Esophagus muscularis mucosa (tissue), 4 donors: ENCODE measurements at regions of chr10 and their contacts with region 1.

Region 1: DNA sequence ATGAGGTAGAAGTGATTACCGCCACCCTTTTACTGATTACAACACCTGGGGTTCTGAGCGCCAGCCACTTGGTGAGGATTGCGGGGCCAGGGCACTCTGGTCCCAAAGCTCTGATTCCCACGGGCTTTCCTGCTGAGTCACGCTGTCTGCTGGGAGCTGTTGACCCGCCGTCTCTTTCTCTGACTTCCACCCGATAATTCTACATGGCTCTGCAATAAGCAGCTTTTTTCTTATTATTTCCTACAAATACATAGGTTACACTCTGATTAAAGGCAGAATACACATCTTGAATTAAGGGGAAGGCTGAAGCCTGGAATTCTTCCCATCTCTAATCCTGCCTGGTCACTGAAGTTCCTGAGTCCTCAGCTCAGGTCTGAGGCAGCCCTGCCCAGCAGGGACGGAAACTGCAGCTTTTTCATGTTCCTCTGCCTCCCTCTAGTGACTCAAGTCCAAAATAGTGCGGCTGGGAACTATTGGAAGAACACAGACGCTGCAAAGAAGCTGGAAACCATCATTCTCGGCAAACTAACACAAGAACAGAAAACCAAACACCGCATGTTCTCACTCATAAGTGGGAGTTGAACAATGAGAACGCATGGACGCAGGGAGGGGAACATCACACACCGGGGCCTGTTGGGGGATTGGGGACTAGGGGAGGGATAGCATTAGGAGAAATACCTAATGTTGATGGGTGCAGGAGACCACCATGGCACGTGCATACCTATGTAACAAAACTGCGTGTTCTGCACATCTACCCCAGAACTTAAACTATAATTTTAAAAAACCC is 178.3 kb downstream of the PRKCQ start:
- DNase-seq: no peak
- H3K4me3 ChIP-seq: peak overlapping the region; percentile 46 to 50 (median 46)
- H3K27ac ChIP-seq: peak overlapping the region; percentile 32 to 72 (median 38)
- H3K4me1 ChIP-seq: peaks cover 2 to 25% (median 22%) of the 10 kb centered on the region in 4 donors
- H3K27me3 ChIP-seq: no peaks in the 10 kb centered on the region
- CTCF ChIP-seq: peak; percentile 76 to 89 (median 80)
- EP300 ChIP-seq: no peak
- POLR2A ChIP-seq: no peak

Region 2: GRCh38 chr10:5818894-5819293 is 582.9 kb before region 1 on chr10:
- intact Hi-C with region 1: no loop called
- DNase-seq: no peak
- H3K4me3 ChIP-seq: no peak overlapping the region
- H3K27ac ChIP-seq: no peak overlapping the region
- H3K4me1 ChIP-seq: peaks cover 8 to 13% (median 10%) of the 10 kb centered on the region in 4 donors
- H3K27me3 ChIP-seq: no peaks in the 10 kb centered on the region
- CTCF ChIP-seq: no peak
- EP300 ChIP-seq: no peak
- POLR2A ChIP-seq: no peak

Region 3: GRCh38 chr10:6014241-6014761 is 387.5 kb before region 1 on chr10:
- intact Hi-C with region 1: loop called (anchors 5 kb)
- DNase-seq: peak; percentile 94
- H3K4me3 ChIP-seq: no peak overlapping the region
- H3K27ac ChIP-seq: peak overlapping the region in 1 of 4 donors; percentile 6
- H3K4me1 ChIP-seq: peaks cover 0 to 4% (median 3%) of the 10 kb centered on the region in 4 donors
- H3K27me3 ChIP-seq: no peaks in the 10 kb centered on the region
- CTCF ChIP-seq: peak; percentile 68 to 74 (median 73)
- EP300 ChIP-seq: no peak
- POLR2A ChIP-seq: no peak

Region 4: DNA sequence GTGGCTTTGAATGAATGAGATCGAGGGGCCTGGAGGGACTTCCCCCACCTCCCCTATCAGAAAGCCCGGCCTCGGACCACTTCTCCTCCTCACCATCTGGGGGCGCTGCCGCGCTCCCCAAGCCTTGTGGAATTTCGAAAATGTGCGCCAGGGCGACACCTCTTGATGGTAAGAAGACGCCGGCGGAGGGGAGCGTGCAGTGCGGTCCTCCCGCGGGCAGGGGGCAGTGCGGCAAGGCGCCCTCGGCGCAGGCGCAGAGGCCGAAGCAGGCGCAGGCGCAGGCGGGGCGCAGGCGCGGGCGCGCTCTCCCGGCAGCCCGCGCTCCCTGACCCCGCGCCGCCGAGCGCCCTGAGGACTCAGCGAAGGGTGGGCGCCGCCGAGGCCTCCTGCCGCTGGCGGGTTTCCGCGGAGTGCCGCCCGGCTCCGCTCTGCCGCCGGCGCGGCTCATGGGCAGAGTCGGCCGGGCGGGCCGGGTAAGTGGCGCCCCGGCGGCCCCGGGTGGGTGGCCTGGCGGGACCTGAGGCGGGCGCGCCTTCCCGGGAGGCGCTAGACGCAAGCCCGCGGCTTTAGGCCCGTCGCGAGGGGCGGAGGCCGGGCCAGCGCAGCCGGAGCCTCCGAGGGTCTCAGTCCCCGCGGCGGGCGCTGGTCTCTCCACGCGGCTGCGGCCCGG is 312.9 kb before region 1 on chr10 and contains the start of gene RBM17:
- intact Hi-C with region 1: loop called (anchors 5 kb)
- DNase-seq: peak; percentile 99
- H3K4me3 ChIP-seq: peak within 1 kb of the TSS; percentile 93 to 99 (median 99)
- H3K27ac ChIP-seq: peak within 1 kb of the TSS; percentile 88 to 95 (median 90)
- H3K4me1 ChIP-seq: peaks cover 50 to 60% (median 56%) of the 10 kb centered on the region in 4 donors
- H3K27me3 ChIP-seq: peaks cover 0 to 5% (median 0%) of the 10 kb centered on the region in 4 donors
- CTCF ChIP-seq: peak in 2 of 3 experiments; percentile 100
- EP300 ChIP-seq: no peak
- POLR2A ChIP-seq: no peak
- total RNA-seq, gene RBM17: 48.5 to 72.9 (median 59.5) TPM

Region 5: DNA sequence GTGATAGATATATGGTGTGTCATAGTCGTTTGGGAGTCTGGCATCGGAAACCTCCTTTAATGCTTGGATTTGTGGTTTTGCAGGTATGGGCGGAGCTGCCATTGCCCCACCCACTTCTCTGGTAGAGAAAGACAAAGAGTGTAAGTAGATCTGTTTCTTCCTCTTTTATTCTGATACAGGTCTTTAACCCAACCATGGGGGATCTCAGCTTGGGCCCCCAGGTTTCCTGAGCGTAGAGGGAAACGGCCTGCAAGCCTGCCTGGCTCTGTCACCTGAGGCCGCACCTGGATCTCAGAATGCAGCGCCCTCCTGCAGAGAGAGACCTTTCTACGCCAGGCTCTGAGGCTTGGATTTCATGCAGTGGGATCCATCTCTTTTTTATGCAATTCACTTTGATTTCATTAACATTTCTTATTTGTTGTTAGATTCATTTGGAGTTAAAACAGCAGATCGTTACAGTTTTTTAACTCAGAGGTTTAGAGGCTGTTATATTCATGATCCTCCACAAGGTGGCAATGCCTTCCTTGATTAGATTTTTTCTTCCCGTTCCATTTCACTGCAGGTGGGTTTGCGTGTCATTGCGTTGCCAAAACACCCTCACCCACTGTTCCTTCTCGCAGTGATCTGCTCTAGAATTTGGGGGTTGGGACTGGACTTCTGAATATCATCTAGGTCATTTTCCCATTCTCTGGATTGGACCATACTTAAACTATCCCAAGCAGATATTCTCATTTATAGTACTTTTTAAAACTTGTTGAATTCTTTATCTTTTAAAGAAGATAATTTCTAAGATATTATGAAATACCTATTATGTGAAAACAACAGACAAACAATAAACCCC is 292.9 kb before region 1 on chr10:
- intact Hi-C with region 1: loop called (anchors 2 kb)
- DNase-seq: no peak
- H3K4me3 ChIP-seq: no peak overlapping the region
- H3K27ac ChIP-seq: no peak overlapping the region
- H3K4me1 ChIP-seq: peaks cover 0 to 7% (median 5%) of the 10 kb centered on the region in 4 donors
- H3K27me3 ChIP-seq: no peaks in the 10 kb centered on the region
- CTCF ChIP-seq: peak; percentile 64 to 80 (median 74)
- EP300 ChIP-seq: no peak
- POLR2A ChIP-seq: no peak